B cell (primary cell): ENCODE measurements at regions of chr22 and their contacts with region 1.

Region 1: GRCh38 chr22:40922484-40923303 is 28.5 kb upstream of the RBX1 start:
- DNase-seq: peak; percentile 83
- ATAC-seq: peak; percentile 94
- H3K4me3 ChIP-seq: peak overlapping the region in 2 of 5 experiments; percentile 12 to 47
- H3K4me3 Mint-ChIP-seq: peak overlapping the region; percentile 67
- H3K27ac ChIP-seq: no peak overlapping the region
- H3K27ac Mint-ChIP-seq: peak overlapping the region; percentile 32
- H3K4me1 ChIP-seq: peaks cover 4 to 5% of the 10 kb centered on the region in 2 donors
- H3K4me1 Mint-ChIP-seq: peaks cover 4% of the 10 kb centered on the region
- H3K27me3 ChIP-seq: no peaks in the 10 kb centered on the region
- H3K27me3 Mint-ChIP-seq: no peaks in the 10 kb centered on the region
- CTCF ChIP-seq: peak; percentile 87

Region 2: GRCh38 chr22:40116496-40117200 is 806.0 kb before region 1 on chr22:
- CTCF ChIA-PET with region 1: no interaction called
- POLR2A ChIA-PET with region 1: no interaction called
- intact Hi-C with region 1: no loop called
- DNase-seq: no peak
- ATAC-seq: no peak
- H3K4me3 ChIP-seq: no peak overlapping the region
- H3K4me3 Mint-ChIP-seq: no peak overlapping the region
- H3K27ac ChIP-seq: peak overlapping the region in 1 of 2 donors; percentile 22
- H3K27ac Mint-ChIP-seq: peak overlapping the region; percentile 24
- H3K4me1 ChIP-seq: peaks cover 17 to 24% of the 10 kb centered on the region in 2 donors
- H3K4me1 Mint-ChIP-seq: peaks cover 66% of the 10 kb centered on the region
- H3K27me3 ChIP-seq: no peaks in the 10 kb centered on the region
- H3K27me3 Mint-ChIP-seq: no peaks in the 10 kb centered on the region
- CTCF ChIP-seq: no peak

Region 3: DNA sequence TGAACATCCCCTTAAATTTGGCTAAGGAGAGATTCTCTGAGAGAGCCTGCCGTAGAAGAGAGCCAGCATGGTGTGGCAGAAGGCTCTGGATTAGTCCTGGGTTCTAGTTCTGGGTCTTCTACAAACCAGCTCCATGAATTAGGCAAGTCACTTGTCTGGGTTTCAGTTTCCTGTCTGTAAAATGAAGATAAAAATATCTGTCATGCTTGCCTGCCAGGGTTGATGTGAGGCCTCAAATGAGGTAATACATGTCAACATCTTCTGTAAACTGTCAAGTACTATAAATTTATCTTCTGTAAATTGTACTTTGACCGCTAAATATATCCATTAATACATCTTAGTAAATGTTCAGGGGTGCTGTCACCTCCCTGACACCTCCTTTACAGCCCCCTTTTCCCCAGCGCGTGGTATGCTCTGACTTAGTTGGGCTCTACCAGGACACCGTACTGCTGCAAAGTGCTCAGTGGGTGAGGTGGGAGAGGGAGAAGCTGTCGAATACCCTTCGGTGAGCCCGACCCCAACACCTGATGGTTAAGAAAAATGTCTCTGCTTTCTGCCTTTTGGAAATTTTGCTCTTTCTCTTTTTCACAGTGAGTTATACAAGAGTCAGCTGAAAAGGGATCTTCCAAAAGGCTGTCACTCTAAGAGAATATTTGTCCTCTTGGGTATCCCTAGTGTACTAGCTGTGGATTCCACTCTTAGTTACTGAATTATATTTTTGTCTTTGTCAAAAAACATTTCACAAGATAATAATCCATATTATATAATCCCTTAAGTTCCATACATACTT is 43.4 kb after region 1 on chr22:
- CTCF ChIA-PET with region 1: interaction called, 12 read pairs
- POLR2A ChIA-PET with region 1: no interaction called
- intact Hi-C with region 1: no loop called
- DNase-seq: no peak
- ATAC-seq: no peak
- H3K4me3 ChIP-seq: no peak overlapping the region
- H3K4me3 Mint-ChIP-seq: no peak overlapping the region
- H3K27ac ChIP-seq: peak overlapping the region in 1 of 2 donors; percentile 57
- H3K27ac Mint-ChIP-seq: no peak overlapping the region
- H3K4me1 ChIP-seq: peaks cover 4 to 6% of the 10 kb centered on the region in 2 donors
- H3K4me1 Mint-ChIP-seq: peaks cover 9% of the 10 kb centered on the region
- H3K27me3 ChIP-seq: no peaks in the 10 kb centered on the region
- H3K27me3 Mint-ChIP-seq: no peaks in the 10 kb centered on the region
- CTCF ChIP-seq: no peak

Region 4: GRCh38 chr22:41091132-41092022 is 168.7 kb after region 1 on chr22:
- CTCF ChIA-PET with region 1: interaction called, 40 read pairs
- POLR2A ChIA-PET with region 1: interaction called, 14 read pairs
- intact Hi-C with region 1: loop called (anchors 1 kb)
- DNase-seq: peak; percentile 99
- ATAC-seq: peak; percentile 81
- H3K4me3 ChIP-seq: peak overlapping the region; percentile 74 to 100 (median 92)
- H3K4me3 Mint-ChIP-seq: peak overlapping the region; percentile 98
- H3K27ac ChIP-seq: peak overlapping the region; percentile 97 to 99
- H3K27ac Mint-ChIP-seq: peak overlapping the region; percentile 100
- H3K4me1 ChIP-seq: peaks cover 25% of the 10 kb centered on the region in 2 donors
- H3K4me1 Mint-ChIP-seq: peaks cover 32% of the 10 kb centered on the region
- H3K27me3 ChIP-seq: no peaks in the 10 kb centered on the region
- H3K27me3 Mint-ChIP-seq: no peaks in the 10 kb centered on the region
- CTCF ChIP-seq: no peak

Region 5: GRCh38 chr22:41123151-41123550 is 200.5 kb after region 1 on chr22:
- CTCF ChIA-PET with region 1: interaction called, 32 read pairs
- POLR2A ChIA-PET with region 1: no interaction called
- intact Hi-C with region 1: loop called (anchors 5 kb)
- DNase-seq: no peak
- ATAC-seq: no peak
- H3K4me3 ChIP-seq: no peak overlapping the region
- H3K4me3 Mint-ChIP-seq: no peak overlapping the region
- H3K27ac ChIP-seq: peak overlapping the region in 1 of 2 donors; percentile 50
- H3K27ac Mint-ChIP-seq: no peak overlapping the region
- H3K4me1 ChIP-seq: no peaks in the 10 kb centered on the region
- H3K4me1 Mint-ChIP-seq: peaks cover 23% of the 10 kb centered on the region
- H3K27me3 ChIP-seq: no peaks in the 10 kb centered on the region
- H3K27me3 Mint-ChIP-seq: no peaks in the 10 kb centered on the region
- CTCF ChIP-seq: no peak

Region 6: GRCh38 chr22:41146573-41146972 is 223.9 kb after region 1 on chr22:
- CTCF ChIA-PET with region 1: interaction called, 12 read pairs
- POLR2A ChIA-PET with region 1: no interaction called
- intact Hi-C with region 1: no loop called
- DNase-seq: no peak
- ATAC-seq: no peak
- H3K4me3 ChIP-seq: no peak overlapping the region
- H3K4me3 Mint-ChIP-seq: no peak overlapping the region
- H3K27ac ChIP-seq: no peak overlapping the region
- H3K27ac Mint-ChIP-seq: no peak overlapping the region
- H3K4me1 ChIP-seq: no peaks in the 10 kb centered on the region
- H3K4me1 Mint-ChIP-seq: no peaks in the 10 kb centered on the region
- H3K27me3 ChIP-seq: no peaks in the 10 kb centered on the region
- H3K27me3 Mint-ChIP-seq: no peaks in the 10 kb centered on the region
- CTCF ChIP-seq: no peak